Ovary (tissue), 10 donors: ENCODE measurements at regions of chr1 and their contacts with region 1.

Region 1: DNA sequence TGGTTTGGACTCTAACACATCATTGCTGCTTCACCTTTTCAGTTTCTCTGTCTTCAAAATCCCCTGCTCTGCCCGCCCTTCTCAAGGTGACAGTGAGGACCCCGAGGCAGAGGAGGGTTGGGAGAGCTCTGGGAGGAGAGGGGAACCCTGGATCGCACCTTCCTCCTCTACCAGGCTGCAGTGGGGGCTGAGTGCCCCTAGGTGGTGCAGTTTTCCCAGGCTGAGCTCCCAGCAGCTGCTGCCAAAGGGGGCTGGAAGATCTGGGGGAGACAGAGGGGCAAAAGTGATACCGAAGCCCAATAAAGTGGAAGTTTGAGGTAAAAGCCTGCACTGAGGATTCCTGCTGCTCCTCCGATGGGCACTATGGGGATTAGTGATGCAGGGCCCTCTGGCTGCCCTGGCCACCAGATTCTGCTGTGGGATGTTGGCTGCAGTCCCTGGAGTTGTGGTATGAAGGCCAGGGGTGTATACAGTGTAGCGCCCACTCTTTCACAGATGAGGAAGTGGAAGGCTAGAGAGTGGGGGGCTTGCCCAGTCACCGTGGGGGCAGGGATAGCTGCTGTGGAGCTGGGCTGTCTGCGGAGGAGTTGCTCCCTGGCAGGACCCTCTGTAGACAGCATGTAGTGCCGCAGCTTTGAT is 40.7 kb upstream of the SCMH1 start:
- DNase-seq: peak; percentile 22 to 63 (median 52)
- H3K4me3 ChIP-seq: no peak overlapping the region
- H3K27ac ChIP-seq: no peak overlapping the region
- H3K4me1 ChIP-seq: peaks cover 3% of the 10 kb centered on the region
- H3K27me3 ChIP-seq: no peaks in the 10 kb centered on the region
- CTCF ChIP-seq: peak; percentile 45 to 74 (median 70)
- EP300 ChIP-seq: no peak
- POLR2A ChIP-seq: no peak

Region 2: GRCh38 chr1:41423511-41424221 is 140.9 kb after region 1 on chr1:
- intact Hi-C with region 1: loop called (anchors 5 kb)
- DNase-seq: no peak
- H3K4me3 ChIP-seq: no peak overlapping the region
- H3K27ac ChIP-seq: no peak overlapping the region
- H3K4me1 ChIP-seq: no peaks in the 10 kb centered on the region
- H3K27me3 ChIP-seq: no peaks in the 10 kb centered on the region
- CTCF ChIP-seq: no peak
- EP300 ChIP-seq: no peak
- POLR2A ChIP-seq: no peak